WTC11 (cell line): ENCODE measurements at regions of chr12 and their contacts with region 1.

Region 1: GRCh38 chr12:92108651-92109050 is 37.0 kb downstream of the BTG1 start:
- DNase-seq: no peak
- ATAC-seq: peak; percentile 59
- H3K4me3 Mint-ChIP-seq: peak overlapping the region; percentile 7; the same call in 1 of the 2 replicates
- H3K27ac Mint-ChIP-seq: peak overlapping the region; percentile 41
- H3K4me1 Mint-ChIP-seq: peaks cover 64% of the 10 kb centered on the region
- H3K27me3 Mint-ChIP-seq: no peaks in the 10 kb centered on the region
- CTCF ChIP-seq: no peak

Region 2: GRCh38 chr12:92145731-92146496 is 37.3 kb after region 1 on chr12 and contains the start of gene BTG1:
- CTCF ChIA-PET with region 1: interaction called, 5 read pairs
- POLR2A ChIA-PET with region 1: interaction called, 17 read pairs
- DNase-seq: peak; percentile 98
- ATAC-seq: peak; percentile 89
- H3K4me3 Mint-ChIP-seq: peak within 1 kb of the TSS; percentile 99
- H3K27ac Mint-ChIP-seq: peak within 1 kb of the TSS; percentile 100
- H3K4me1 Mint-ChIP-seq: peaks cover 56% of the 10 kb centered on the region
- H3K27me3 Mint-ChIP-seq: no peaks in the 10 kb centered on the region
- CTCF ChIP-seq: no peak
- total RNA-seq, gene BTG1: 26.7 to 32.0 TPM (median 31.2 TPM) in 3 replicates